ENCODE measurements at regions of chr17 and their contacts with region 1.

Region 1: GRCh38 chr17:37701496-37701898 is 43.4 kb downstream of the HNF1B start:
- DNase-seq: peak in 1 of 2 experiments; percentile 85
- H3K4me3 ChIP-seq: no peak overlapping the region
- H3K27ac ChIP-seq: no peak overlapping the region
- H3K4me1 ChIP-seq: no peaks in the 10 kb centered on the region
- H3K27me3 ChIP-seq: no peaks in the 10 kb centered on the region
- CTCF ChIP-seq: peak; percentile 77 to 84 (median 78)
- EP300 ChIP-seq: no peak
- POLR2A ChIP-seq: no peak
- RAD21 ChIP-seq: peak; percentile 71 to 77

Region 2: GRCh38 chr17:37683454-37683984 is 18.0 kb before region 1 on chr17:
- CTCF ChIA-PET with region 1: interaction called, 16 read pairs
- POLR2A ChIA-PET with region 1: no interaction called
- DNase-seq: no peak
- H3K4me3 ChIP-seq: no peak overlapping the region
- H3K27ac ChIP-seq: no peak overlapping the region
- H3K4me1 ChIP-seq: no peaks in the 10 kb centered on the region
- H3K27me3 ChIP-seq: no peaks in the 10 kb centered on the region
- CTCF ChIP-seq: no peak
- EP300 ChIP-seq: no peak
- POLR2A ChIP-seq: no peak
- RAD21 ChIP-seq: no peak

Region 3: DNA sequence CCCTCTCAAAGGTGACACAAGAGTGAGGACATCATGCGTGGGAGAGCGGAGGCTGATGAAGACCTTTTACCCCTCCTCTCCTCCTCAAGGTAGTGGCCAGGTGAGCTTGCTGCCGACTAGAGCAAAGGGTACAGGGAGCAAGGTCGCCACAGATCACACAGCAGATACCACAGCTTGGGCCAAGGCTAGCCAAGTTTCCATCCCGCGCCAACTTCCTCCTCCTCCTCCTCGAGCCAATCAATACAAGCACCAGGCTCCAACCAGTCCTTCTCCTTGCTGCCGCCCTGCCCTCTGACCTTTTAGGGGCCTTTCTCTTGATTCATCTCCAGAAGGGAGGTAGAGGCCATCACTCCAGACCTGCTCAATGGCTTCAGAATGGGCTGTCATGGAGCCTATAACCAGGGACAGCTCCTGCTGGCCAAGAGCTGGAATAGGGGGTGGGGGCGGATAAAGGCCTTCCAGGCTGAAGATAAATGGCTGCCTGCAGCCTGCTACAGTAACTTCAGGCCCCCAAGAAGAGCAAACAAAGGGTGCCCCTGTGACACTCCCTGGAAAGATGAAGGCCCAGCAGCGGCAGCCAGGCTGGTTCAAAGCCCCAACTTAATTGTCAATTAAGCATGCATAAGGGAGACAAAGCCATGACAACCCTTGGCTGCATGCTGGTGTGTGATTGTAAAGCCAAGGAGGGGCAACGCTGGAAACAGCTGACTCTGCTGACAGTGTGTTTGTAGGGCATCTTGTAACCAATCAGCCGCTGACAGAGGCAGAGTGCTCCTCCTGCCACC is 25.6 kb after region 1 on chr17:
- CTCF ChIA-PET with region 1: no interaction called
- POLR2A ChIA-PET with region 1: no interaction called
- DNase-seq: no peak
- H3K4me3 ChIP-seq: no peak overlapping the region
- H3K27ac ChIP-seq: no peak overlapping the region
- H3K4me1 ChIP-seq: no peaks in the 10 kb centered on the region
- H3K27me3 ChIP-seq: peaks cover 0 to 13% (median 6%) of the 10 kb centered on the region in 4 experiments; a peak in 5 of 7 replicates
- CTCF ChIP-seq: no peak
- EP300 ChIP-seq: no peak
- POLR2A ChIP-seq: no peak
- RAD21 ChIP-seq: no peak

Region 4: DNA sequence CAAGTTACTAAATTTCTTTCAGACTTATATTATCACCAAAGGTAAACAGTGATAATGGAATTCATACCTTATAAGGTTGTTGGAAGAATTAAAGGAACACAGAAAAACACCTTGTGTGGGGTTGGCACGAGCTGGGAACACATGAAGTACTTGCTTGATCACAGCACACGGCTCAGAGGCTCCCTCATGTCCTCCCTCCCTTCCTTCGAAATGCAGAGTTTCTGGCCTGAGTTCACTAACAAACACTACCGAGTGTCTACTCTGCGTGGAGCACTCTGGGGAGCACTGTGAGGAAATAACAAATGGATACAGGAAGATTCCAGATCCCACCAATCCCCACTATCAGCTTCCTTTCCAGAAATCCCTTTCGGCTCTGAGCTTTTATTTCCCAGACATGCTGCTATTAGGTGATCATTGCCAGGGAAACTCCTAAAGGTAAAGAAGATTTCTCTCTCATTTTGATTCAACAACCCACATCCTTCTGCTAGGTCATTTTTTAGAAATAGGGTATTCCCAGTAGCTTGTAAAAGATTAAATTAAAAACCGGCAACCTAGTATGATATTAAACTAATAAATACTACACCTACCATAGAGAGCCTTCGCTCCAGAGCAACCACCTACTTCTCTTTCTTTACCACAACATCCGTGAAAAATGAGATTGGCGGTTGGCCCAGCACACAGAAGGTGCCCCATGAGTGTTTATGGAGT is 49.4 kb after region 1 on chr17:
- CTCF ChIA-PET with region 1: interaction called, 11 read pairs
- POLR2A ChIA-PET with region 1: no interaction called
- DNase-seq: no peak
- H3K4me3 ChIP-seq: no peak overlapping the region
- H3K27ac ChIP-seq: no peak overlapping the region
- H3K4me1 ChIP-seq: peaks cover 0 to 3% (median 0%) of the 10 kb centered on the region in 4 experiments; a peak in 1 of 7 replicates
- H3K27me3 ChIP-seq: peaks cover 20 to 34% (median 27%) of the 10 kb centered on the region in 4 experiments
- CTCF ChIP-seq: no peak
- EP300 ChIP-seq: no peak
- POLR2A ChIP-seq: no peak
- RAD21 ChIP-seq: no peak

Region 5: GRCh38 chr17:37802061-37802595 is 100.6 kb after region 1 on chr17:
- CTCF ChIA-PET with region 1: no interaction called
- POLR2A ChIA-PET with region 1: no interaction called
- DNase-seq: no peak
- H3K4me3 ChIP-seq: no peak overlapping the region
- H3K27ac ChIP-seq: no peak overlapping the region
- H3K4me1 ChIP-seq: no peaks in the 10 kb centered on the region
- H3K27me3 ChIP-seq: no peaks in the 10 kb centered on the region
- CTCF ChIP-seq: no peak
- EP300 ChIP-seq: no peak
- POLR2A ChIP-seq: no peak
- RAD21 ChIP-seq: no peak

Measured in H1 (cell line).